Motor neuron (in vitro differentiated cells): ENCODE measurements at regions of chr18 and their contacts with region 1.

Region 1: DNA sequence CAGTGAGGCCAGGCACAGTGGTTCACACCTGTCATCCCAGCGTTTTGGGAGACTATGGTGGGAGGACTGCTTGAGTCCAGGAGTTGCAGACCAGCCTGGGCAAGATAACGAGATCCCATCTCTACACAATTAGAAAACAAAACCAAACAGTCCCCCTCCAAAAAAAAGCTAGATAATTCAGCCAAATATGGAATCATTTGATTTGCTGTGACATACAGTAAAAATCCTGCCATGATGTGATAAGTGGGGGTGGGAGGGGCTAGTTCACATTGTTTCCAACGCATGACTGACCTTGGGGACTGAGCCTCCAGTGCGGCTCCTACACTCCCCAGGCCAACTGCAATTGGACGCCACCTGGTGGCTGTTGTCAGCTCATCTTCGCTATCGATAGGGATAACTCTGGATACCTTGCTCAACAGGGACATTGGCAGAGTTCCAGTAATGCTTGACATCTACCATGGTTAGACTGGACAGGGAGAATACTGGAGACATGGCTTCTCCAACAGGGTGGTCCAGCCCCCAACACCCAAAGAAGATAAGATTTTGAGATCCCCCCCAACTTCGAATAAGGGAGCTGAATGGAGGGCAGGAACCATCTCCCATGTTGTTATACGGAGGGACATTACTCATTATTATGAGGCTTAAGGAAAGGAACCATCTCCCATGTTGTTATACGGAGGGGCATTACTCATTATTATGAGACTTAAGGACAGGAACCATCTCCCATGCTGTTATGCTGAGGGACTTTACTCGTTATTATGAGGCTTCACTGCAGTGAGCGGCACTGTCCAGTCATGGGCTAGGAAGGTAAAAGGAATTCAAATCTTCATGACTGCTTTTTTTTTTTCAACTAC is 135.9 kb downstream of the TGIF1 start:
- ATAC-seq: peak; percentile 67 to 99 (median 90)
- H3K4me3 ChIP-seq: no peak overlapping the region
- H3K27ac ChIP-seq: no peak overlapping the region
- H3K4me1 ChIP-seq: no peaks in the 10 kb centered on the region

Region 2: GRCh38 chr18:3162181-3162580 is 423.7 kb before region 1 on chr18:
- in situ Hi-C with region 1: no loop called
- ATAC-seq: peak in 2 of 8 experiments; percentile 64 to 97
- H3K4me3 ChIP-seq: no peak overlapping the region
- H3K27ac ChIP-seq: no peak overlapping the region
- H3K4me1 ChIP-seq: no peaks in the 10 kb centered on the region

Region 3: GRCh38 chr18:3281456-3282400 is 304.2 kb before region 1 on chr18:
- in situ Hi-C with region 1: loop called in 5 of 9 experiments (anchors 10 to 25 kb)
- ATAC-seq: peak; percentile 72 to 87 (median 79)
- H3K4me3 ChIP-seq: no peak overlapping the region
- H3K27ac ChIP-seq: no peak overlapping the region
- H3K4me1 ChIP-seq: peaks cover 5 to 6% of the 10 kb centered on the region in 2 donors

Region 4: DNA sequence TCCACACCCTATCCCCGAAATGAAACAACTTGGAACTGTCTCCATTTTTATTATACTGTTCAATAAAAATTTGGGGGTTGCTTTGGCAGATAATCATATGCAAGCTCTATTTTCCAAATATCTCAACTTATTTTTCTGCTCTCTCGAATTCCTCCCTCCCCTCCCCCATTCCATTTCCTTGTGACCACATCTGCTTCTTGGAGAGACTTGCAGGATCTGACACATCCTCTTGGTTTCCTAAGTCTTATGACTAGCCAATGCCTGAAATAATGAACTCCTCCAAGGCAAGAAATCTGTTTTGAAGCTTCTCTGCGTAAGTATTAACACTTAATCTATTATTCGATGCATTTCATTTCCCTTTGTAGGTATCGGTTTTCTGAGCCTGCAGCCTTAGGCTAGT is 119.8 kb before region 1 on chr18:
- in situ Hi-C with region 1: loop called in 4 of 9 experiments (anchors 10 to 25 kb)
- ATAC-seq: peak in 3 of 8 experiments; percentile 9 to 73 (median 72)
- H3K4me3 ChIP-seq: no peak overlapping the region
- H3K27ac ChIP-seq: no peak overlapping the region
- H3K4me1 ChIP-seq: peaks cover 0 to 3% of the 10 kb centered on the region in 2 donors

Region 5: DNA sequence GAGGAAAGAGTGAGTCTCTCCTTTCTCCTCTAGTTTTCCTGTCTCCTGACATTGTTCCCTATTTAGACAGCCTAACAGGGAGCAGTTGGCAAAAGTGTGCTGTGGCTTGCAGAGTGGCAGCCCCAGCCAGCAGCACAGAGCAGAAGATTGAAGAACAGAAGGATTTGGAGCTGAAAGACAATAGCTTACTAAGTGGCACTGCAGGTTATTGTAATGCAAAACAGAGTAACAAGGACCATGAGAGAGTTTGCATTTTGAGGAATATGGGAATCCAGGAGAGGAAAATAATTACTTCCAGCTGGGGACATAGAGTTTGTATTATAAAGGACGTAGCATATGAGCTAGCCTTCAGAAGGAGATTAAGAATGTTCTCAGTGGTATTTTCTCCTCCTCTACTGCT is 1268.8 kb after region 1 on chr18:
- in situ Hi-C with region 1: no loop called
- ATAC-seq: peak in 4 of 8 experiments; percentile 37 to 60 (median 50)
- H3K4me3 ChIP-seq: no peak overlapping the region
- H3K27ac ChIP-seq: no peak overlapping the region
- H3K4me1 ChIP-seq: no peaks in the 10 kb centered on the region